Aorta (tissue), 5 donors: ENCODE measurements at regions of chr10 and their contacts with region 1.

Region 1: GRCh38 chr10:77592946-77593636 is 44.5 kb downstream of the KCNMA1 start:
- DNase-seq: peak; percentile 78 to 81
- ATAC-seq: peak; percentile 73
- H3K4me3 ChIP-seq: no peak overlapping the region
- H3K27ac ChIP-seq: peak overlapping the region in 1 of 2 donors; percentile 67
- H3K4me1 ChIP-seq: peaks cover 0 to 3% of the 10 kb centered on the region in 2 donors
- H3K27me3 ChIP-seq: no peaks in the 10 kb centered on the region

Region 2: GRCh38 chr10:77422491-77423338 is 170.4 kb before region 1 on chr10:
- intact Hi-C with region 1: loop called in 1 of 2 experiments (anchors 5 kb)
- DNase-seq: peak in 1 of 2 donors; percentile 50
- ATAC-seq: peak; percentile 65
- H3K4me3 ChIP-seq: no peak overlapping the region
- H3K27ac ChIP-seq: peak overlapping the region; percentile 80 to 85
- H3K4me1 ChIP-seq: peaks cover 17 to 31% of the 10 kb centered on the region in 2 donors
- H3K27me3 ChIP-seq: no peaks in the 10 kb centered on the region

Region 3: DNA sequence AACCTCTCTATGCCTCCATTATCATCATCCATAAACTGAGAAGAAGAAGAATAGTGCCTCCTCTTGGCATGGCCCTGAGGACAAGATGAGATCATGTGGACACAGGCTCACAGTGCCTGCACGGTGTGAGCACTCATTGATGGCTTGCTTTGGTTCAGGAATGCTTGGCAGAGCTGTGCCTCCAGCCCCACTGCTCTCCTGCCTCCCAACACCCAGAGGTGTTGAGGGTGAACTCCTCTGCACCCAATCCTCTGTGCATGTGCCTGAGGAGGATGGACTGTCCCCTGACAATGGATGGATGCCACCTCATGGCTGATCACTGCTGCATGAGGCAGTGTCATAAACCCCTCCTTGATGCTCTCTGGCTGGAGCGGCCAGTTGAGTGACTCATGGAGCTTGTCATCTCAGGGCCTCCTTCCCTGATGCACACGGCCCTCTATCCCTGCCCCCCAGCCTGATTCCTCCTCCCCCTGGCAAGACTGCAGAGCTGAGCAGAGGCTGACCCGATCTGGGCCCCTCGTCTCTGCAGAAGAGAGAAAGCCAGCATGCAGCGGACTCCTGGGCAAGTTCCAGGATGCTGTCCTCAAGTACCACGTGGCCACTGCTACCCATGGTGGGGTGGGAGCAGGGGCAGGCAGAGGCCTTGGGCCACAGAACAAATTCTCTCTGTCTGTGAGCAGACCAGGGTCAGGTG is 91.8 kb before region 1 on chr10:
- intact Hi-C with region 1: no loop called
- DNase-seq: peak; percentile 67 to 87
- ATAC-seq: peak; percentile 72
- H3K4me3 ChIP-seq: no peak overlapping the region
- H3K27ac ChIP-seq: no peak overlapping the region
- H3K4me1 ChIP-seq: peaks cover 10 to 11% of the 10 kb centered on the region in 2 donors
- H3K27me3 ChIP-seq: no peaks in the 10 kb centered on the region

Region 4: GRCh38 chr10:77524281-77524711 is 68.8 kb before region 1 on chr10:
- intact Hi-C with region 1: no loop called
- DNase-seq: no peak
- ATAC-seq: no peak
- H3K4me3 ChIP-seq: no peak overlapping the region
- H3K27ac ChIP-seq: peak overlapping the region in 1 of 2 donors; percentile 74
- H3K4me1 ChIP-seq: peaks cover 0 to 2% of the 10 kb centered on the region in 2 donors
- H3K27me3 ChIP-seq: no peaks in the 10 kb centered on the region

Region 5: GRCh38 chr10:77629775-77630506 is 36.9 kb after region 1 on chr10:
- intact Hi-C with region 1: loop called (anchors 5 kb)
- DNase-seq: no peak
- ATAC-seq: no peak
- H3K4me3 ChIP-seq: no peak overlapping the region
- H3K27ac ChIP-seq: no peak overlapping the region
- H3K4me1 ChIP-seq: peaks cover 5 to 14% of the 10 kb centered on the region in 2 donors
- H3K27me3 ChIP-seq: no peaks in the 10 kb centered on the region